GM23248 (cell line): ENCODE measurements at regions of chr9 and their contacts with region 1.

Region 1: DNA sequence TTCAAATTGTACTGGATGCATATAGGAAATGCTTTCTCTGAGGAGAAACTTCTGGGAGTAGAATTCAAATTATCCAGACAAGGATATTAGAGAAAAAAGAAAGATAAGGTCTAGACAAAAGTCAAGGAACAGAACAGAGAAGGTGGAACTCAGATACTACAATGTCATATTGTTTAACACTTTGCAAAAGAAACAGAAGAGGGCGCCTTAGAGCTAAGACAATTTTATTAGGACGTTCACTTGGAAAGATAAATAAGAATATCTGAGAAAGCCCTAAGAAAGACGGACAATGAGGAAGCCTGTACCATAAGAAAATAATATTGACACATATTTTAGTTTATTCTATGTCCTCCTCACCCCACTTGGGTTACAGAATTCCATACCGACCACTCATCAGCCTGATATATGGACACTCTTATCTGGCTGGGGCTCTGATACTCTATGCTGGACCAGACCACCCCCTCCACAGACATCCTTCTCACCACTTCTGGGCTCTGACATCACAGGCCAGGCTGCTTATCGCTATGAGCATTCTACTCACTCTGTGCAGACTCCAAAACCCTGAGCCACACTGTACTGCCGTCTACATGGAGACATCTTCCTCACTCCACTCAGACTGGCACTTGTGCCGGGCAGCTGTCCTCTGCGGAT is 9.1 kb upstream of the AK3 start:
- DNase-seq: peak; percentile 63
- H3K4me3 ChIP-seq: no peak overlapping the region
- H3K27ac ChIP-seq: no peak overlapping the region
- H3K4me1 ChIP-seq: no peaks in the 10 kb centered on the region
- H3K27me3 ChIP-seq: no peaks in the 10 kb centered on the region

Region 2: DNA sequence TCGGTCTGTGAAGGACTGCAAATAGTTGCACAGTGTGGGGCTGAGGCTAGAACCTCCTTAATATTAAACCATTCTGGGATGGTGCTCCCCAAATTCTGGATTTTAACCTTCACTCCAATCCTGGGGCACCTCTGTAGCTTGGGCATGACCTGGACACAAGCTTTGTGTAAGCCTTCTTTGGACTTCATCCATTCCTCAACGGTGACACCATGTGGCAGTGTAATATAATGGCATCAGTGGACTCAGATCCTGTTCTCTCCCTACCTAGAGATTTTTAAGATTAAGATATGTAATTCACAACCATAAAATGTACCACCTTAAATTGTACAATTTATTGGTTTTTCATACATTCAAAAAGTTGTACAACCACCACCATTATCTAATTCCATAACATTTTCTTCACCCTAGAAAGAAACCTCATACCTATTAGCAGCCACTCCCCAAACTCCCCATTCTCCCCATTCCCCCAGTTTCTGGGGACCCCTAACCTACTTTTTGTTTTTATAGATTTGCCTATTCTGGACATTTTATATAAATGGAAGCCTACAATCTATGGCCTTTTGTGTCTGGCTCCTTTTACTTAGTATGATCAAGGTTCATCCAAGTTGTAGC is 692.4 kb after region 1 on chr9:
- in situ Hi-C with region 1: loop called (anchors 10 kb)
- DNase-seq: peak; percentile 76
- H3K4me3 ChIP-seq: no peak overlapping the region
- H3K27ac ChIP-seq: no peak overlapping the region
- H3K4me1 ChIP-seq: peaks cover 21% of the 10 kb centered on the region
- H3K27me3 ChIP-seq: no peaks in the 10 kb centered on the region